ENCODE measurements at regions of chr7 and their contacts with region 1.

Region 1: GRCh38 chr7:83996879-83997278 is 197.7 kb downstream of the SEMA3A start:
- DNase-seq: no peak
- ATAC-seq: no peak
- H3K4me3 Mint-ChIP-seq: no peak overlapping the region
- H3K27ac Mint-ChIP-seq: no peak overlapping the region
- H3K4me1 Mint-ChIP-seq: no peaks in the 10 kb centered on the region
- H3K27me3 Mint-ChIP-seq: no peaks in the 10 kb centered on the region

Region 2: GRCh38 chr7:83964318-83964717 is 32.6 kb before region 1 on chr7:
- CTCF ChIA-PET with region 1: no interaction called
- POLR2A ChIA-PET with region 1: no interaction called
- intact Hi-C with region 1: loop called in 1 of 2 experiments (anchors 1 kb)
- DNase-seq: no peak
- ATAC-seq: no peak
- H3K4me3 Mint-ChIP-seq: no peak overlapping the region
- H3K27ac Mint-ChIP-seq: no peak overlapping the region
- H3K4me1 Mint-ChIP-seq: no peaks in the 10 kb centered on the region
- H3K27me3 Mint-ChIP-seq: no peaks in the 10 kb centered on the region

Measured in activated CD4-positive, alpha-beta T cell treated with anti-CD3 and anti-CD28 coated beads for 36 hours (primary cell).